A549 (cell line): ENCODE measurements at regions of chr17 and their contacts with region 1.

Region 1: DNA sequence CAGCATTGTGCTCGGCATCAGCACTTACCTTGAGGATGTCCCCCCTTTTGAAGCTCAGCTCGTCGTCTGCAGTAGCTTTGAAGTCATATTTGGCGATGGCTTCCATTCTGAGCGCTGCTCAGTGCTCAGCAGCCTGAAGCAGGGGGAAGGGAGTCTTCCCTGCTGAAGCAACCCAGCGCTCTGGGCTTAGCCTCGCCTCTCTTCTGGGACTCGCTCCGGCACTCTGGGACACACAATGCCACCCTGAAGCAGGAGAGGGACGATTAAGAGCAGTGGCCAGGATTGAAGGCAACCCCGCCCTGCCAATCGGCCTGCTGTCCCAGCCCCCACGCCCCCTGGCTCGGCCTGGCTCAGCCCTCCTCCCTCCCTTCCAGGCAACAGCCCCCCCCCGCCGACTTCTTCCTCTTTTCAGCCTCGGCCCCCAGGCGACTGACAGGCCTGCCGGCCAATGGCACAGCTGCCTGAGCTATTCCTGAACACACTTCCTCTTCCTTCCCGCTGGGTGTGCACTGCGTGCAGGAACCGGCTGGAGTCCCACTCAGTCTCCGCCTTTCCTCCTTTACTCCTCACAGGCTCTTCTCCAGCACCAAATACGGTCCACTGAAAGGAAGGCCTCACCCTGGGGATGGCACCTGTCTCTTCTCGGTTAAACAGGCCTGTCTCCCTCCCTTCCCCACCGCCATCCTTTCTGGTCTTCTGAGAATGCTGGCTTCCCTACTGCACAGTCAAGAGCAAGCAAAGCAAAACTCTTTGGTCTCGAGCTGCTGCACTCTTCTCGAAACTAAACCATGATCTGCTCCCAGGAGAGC is 11.8 kb downstream of the GRB2 start:
- DNase-seq: peak; percentile 98 to 99
- ATAC-seq: peak; percentile 99 to 100
- H3K4me3 ChIP-seq: peak overlapping the region; percentile 62
- H3K27ac ChIP-seq: peak overlapping the region; percentile 80 to 88
- H3K4me1 ChIP-seq: peaks cover 30% of the 10 kb centered on the region
- CTCF ChIP-seq: no peak
- EP300 ChIP-seq: no peak
- POLR2A ChIP-seq: peak; percentile 79
- RAD21 ChIP-seq: 0 out of 5 replicates have a peak, but pooled peaks of 1 of the 2 experiments have one; percentile 17

Region 2: DNA sequence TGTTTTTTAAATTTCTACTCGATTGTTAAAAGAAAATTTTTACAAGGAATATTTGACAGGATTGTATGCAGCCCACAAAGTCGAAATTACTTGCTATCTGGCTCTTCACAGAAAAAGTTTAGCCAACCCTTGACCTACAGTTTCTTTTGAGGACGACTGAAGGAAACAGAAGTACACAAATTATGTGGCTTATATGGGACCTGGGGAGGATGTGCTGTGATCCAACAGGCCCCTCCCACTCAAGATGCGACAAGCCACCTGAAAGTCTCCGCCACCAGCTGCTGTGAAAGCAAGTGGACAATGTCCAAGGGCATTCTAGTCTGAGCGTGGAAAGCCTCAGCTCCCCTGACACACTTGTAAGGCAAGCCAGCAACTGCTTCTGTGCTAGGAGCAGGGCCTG is 62.1 kb before region 1 on chr17:
- CTCF ChIA-PET with region 1: interaction called, 12 read pairs
- POLR2A ChIA-PET with region 1: no interaction called
- DNase-seq: no peak
- ATAC-seq: no peak
- H3K4me3 ChIP-seq: no peak overlapping the region
- H3K27ac ChIP-seq: no peak overlapping the region
- H3K4me1 ChIP-seq: no peaks in the 10 kb centered on the region
- CTCF ChIP-seq: no peak
- EP300 ChIP-seq: no peak
- POLR2A ChIP-seq: no peak
- RAD21 ChIP-seq: no peak

Region 3: GRCh38 chr17:75442168-75443103 is 48.7 kb after region 1 on chr17:
- CTCF ChIA-PET with region 1: no interaction called
- POLR2A ChIA-PET with region 1: no interaction called
- DNase-seq: peak in 1 of 2 experiments; percentile 66
- ATAC-seq: peak; percentile 55 to 67
- H3K4me3 ChIP-seq: no peak overlapping the region
- H3K27ac ChIP-seq: peak overlapping the region in 1 of 2 experiments; percentile 36; a peak in 3 of 6 replicates
- H3K4me1 ChIP-seq: peaks cover 11% of the 10 kb centered on the region
- CTCF ChIP-seq: no peak
- EP300 ChIP-seq: peak in 1 of 2 experiments; percentile 30; a peak in 1 of 5 replicates
- POLR2A ChIP-seq: no peak
- RAD21 ChIP-seq: no peak

Region 4: DNA sequence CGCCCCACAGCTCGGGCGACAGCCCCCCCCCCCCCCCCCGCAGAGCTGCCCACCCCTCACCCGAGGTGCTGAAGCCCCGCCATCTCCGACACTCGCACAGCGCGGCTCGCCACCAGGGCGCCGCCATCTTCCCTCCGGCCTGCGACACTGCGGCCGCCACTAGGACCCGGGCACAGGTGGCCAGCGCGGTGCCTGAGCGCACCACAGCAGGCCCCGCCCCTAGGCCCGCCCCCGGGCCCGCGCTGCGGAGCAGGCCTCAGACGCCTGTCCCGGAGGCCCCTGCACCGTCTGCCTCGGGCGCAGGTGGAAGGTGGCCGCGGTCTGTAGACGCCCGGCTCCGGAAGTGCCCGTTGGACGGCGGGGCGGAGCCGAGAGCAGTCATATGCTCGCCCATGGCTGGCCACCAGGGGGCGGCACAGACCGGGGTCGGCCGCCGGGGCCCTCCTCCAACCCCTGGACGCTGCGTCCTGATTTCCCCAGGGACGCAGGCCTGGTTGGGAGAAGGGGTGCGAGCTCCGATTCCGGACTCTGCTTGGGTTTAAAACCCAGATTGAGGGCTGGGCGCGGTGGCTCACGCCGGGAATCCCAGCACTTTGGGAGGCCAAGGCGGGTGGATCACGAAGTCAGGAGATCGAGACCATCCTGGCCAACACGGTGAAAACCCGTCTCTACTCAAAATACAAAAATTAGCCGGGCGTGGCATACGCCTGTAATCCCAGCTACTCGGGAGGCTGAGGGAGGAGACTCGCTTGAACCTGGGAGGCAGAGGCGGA is 511.2 kb after region 1 on chr17 and contains the start of gene MRPL38:
- CTCF ChIA-PET with region 1: no interaction called
- POLR2A ChIA-PET with region 1: no interaction called
- DNase-seq: peak; percentile 97 to 98
- ATAC-seq: peak; percentile 96 to 97
- H3K4me3 ChIP-seq: peak within 1 kb of the TSS; percentile 87
- H3K27ac ChIP-seq: peak within 1 kb of the TSS; percentile 86 to 93
- H3K4me1 ChIP-seq: peaks cover 22% of the 10 kb centered on the region
- CTCF ChIP-seq: peak; percentile 99
- EP300 ChIP-seq: no peak
- POLR2A ChIP-seq: peak; percentile 92
- RAD21 ChIP-seq: peak; percentile 90 to 98
- polyA plus RNA-seq, gene MRPL38: 43.4 and 53.5 TPM in 2 replicates

Region 5: DNA sequence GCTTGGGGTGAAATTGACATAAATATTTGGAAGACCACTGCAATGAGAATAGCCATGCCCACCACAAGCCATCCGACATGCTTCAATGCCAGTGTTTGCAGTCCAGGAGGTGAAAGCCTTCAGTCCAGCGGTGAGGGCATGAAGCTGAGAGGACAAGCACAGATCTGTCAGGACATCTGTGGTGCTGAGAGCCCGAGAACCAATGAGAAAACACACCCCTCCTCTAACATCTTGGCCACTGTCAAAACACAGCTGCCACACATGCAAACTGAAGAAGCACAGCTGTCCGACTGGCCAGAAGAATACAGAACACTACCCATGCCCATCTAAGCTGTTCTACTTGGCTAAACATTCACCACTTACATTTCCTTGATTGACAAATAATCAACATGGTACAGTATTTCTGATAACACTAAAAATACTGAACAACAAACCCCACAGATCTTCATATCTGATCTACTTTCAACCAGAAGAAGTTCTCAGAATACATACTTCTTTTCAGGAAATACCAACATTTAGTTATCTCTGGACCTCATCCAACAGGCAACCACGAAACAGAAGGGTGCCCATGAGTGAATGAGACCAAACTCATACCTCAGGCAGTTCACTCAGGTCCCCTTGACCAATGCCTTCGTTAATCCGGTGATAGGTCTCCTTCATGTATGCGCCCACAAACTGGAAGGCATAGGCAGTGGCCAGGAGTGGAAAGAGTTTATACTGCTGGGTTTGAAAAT is 557.3 kb after region 1 on chr17:
- CTCF ChIA-PET with region 1: no interaction called
- POLR2A ChIA-PET with region 1: no interaction called
- DNase-seq: no peak
- ATAC-seq: no peak
- H3K4me3 ChIP-seq: no peak overlapping the region
- H3K27ac ChIP-seq: no peak overlapping the region
- H3K4me1 ChIP-seq: no peaks in the 10 kb centered on the region
- CTCF ChIP-seq: no peak
- EP300 ChIP-seq: no peak
- POLR2A ChIP-seq: no peak
- RAD21 ChIP-seq: no peak